Activated T-helper 1 cell treated with anti-CD3 and anti-CD28 coated beads, Interleukin-12 subunit alpha, Interleukin-12 subunit beta, Interleukin-2, Interleukin-4 antibody, amounts not matched to agents 30 ng/mL and 10 ng/mL and 1 ng/mL, durations not matched to agents 14 hours and 24 hours and 36 hours (primary cell): ENCODE measurements at regions of chr12 and their contacts with region 1.

Region 1: GRCh38 chr12:62793256-62794217 is 141.4 kb downstream of the PPM1H start:
- DNase-seq: peak; percentile 40
- H3K4me3 Mint-ChIP-seq: no peak overlapping the region
- H3K27ac Mint-ChIP-seq: no peak overlapping the region
- H3K4me1 Mint-ChIP-seq: no peaks in the 10 kb centered on the region
- H3K27me3 Mint-ChIP-seq: peaks cover 12% of the 10 kb centered on the region

Region 2: GRCh38 chr12:62466594-62467491 is 326.7 kb before region 1 on chr12 and contains the start of gene MON2:
- intact Hi-C with region 1: loop called (anchors 1 kb)
- DNase-seq: peak; percentile 86
- H3K4me3 Mint-ChIP-seq: peak within 1 kb of the TSS; percentile 91
- H3K27ac Mint-ChIP-seq: peak within 1 kb of the TSS; percentile 92
- H3K4me1 Mint-ChIP-seq: peaks cover 28% of the 10 kb centered on the region
- H3K27me3 Mint-ChIP-seq: no peaks in the 10 kb centered on the region
- total RNA-seq, gene MON2: 33.1 and 40.8 TPM in 2 replicates

Region 3: DNA sequence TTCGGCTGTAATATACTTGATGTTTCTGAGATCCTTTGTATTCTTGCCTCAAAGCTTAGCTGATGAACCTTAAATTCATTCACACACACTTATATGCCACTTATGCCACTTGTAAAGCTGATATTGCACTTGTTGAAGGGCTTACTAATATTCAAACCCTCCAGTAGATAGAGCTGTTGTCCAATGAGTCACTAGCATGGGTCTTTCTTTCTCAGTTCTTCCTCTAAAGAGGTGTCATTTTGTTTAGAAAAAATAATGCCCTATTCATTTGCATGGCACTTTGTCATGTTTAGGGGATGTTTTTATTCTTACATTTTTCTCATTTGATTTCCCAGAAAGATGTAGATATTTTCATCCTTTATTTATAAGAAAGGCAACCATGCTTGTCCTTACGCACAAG is 270.6 kb before region 1 on chr12:
- intact Hi-C with region 1: loop called (anchors 5 kb)
- DNase-seq: no peak
- H3K4me3 Mint-ChIP-seq: no peak overlapping the region
- H3K27ac Mint-ChIP-seq: peak overlapping the region; percentile 31
- H3K4me1 Mint-ChIP-seq: peaks cover 14% of the 10 kb centered on the region
- H3K27me3 Mint-ChIP-seq: no peaks in the 10 kb centered on the region

Region 4: GRCh38 chr12:62581288-62582064 is 212.1 kb before region 1 on chr12:
- intact Hi-C with region 1: loop called (anchors 1 kb)
- DNase-seq: no peak
- H3K4me3 Mint-ChIP-seq: no peak overlapping the region
- H3K27ac Mint-ChIP-seq: no peak overlapping the region
- H3K4me1 Mint-ChIP-seq: no peaks in the 10 kb centered on the region
- H3K27me3 Mint-ChIP-seq: no peaks in the 10 kb centered on the region

Region 5: GRCh38 chr12:62827042-62827441 is 33.5 kb after region 1 on chr12:
- intact Hi-C with region 1: no loop called
- DNase-seq: no peak
- H3K4me3 Mint-ChIP-seq: no peak overlapping the region
- H3K27ac Mint-ChIP-seq: no peak overlapping the region
- H3K4me1 Mint-ChIP-seq: no peaks in the 10 kb centered on the region
- H3K27me3 Mint-ChIP-seq: peaks cover 12% of the 10 kb centered on the region